ENCODE measurements at regions of chr12 and their contacts with region 1.

Region 1: GRCh38 chr12:51217968-51218606 is at the start of gene POU6F1:
- DNase-seq: peak; percentile 89

Region 2: GRCh38 chr12:51070004-51070403 is 148.1 kb before region 1 on chr12:
- CTCF ChIA-PET with region 1: no interaction called
- POLR2A ChIA-PET with region 1: no interaction called
- DNase-seq: no peak

Region 3: DNA sequence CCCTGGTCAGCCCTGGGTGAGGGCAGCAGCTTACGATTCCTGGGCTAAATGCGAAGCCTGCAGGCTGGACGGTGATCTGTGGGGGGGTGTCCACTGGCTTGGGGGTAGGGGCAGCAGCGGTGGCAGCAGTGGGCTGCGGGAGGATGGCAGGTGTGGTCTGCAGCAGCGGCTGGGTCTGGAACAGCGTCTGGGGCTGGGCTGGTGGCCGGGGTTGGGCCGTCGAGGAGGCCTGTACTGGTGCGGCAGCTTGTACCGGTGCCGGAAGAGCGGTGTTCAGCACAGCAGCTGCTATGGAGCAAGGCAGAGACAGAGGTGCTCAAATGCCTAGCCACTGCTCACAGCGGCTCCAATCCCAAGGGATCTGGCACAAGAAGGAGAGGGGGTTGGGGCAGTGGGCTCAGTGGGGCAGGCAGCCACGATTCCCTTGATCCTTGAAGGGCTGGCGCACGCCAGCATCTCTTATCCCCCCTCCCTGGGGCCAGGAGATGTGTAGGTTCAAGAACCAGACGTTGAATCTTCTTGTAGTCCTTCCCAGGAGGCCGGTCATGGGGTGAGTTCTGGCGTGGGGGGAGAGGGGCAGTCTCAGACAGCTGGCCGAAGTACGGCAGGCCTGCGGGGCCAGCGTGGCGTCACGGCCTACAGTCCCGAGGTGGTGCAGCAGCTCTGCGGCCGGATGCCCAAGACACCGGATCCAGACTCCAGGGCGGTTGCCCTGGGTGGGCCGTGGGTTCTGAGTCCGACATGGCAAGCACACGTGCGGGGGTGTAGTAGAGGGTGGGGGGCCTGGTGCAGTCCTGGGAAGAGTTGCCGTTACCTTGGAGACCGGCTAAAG is 20.1 kb before region 1 on chr12:
- CTCF ChIA-PET with region 1: no interaction called
- POLR2A ChIA-PET with region 1: no interaction called
- DNase-seq: no peak

Region 4: GRCh38 chr12:51238510-51239334 is 20.6 kb after region 1 on chr12 and contains the start of gene DAZAP2:
- CTCF ChIA-PET with region 1: no interaction called
- POLR2A ChIA-PET with region 1: interaction called, 21 read pairs
- DNase-seq: peak; percentile 95

Region 5: DNA sequence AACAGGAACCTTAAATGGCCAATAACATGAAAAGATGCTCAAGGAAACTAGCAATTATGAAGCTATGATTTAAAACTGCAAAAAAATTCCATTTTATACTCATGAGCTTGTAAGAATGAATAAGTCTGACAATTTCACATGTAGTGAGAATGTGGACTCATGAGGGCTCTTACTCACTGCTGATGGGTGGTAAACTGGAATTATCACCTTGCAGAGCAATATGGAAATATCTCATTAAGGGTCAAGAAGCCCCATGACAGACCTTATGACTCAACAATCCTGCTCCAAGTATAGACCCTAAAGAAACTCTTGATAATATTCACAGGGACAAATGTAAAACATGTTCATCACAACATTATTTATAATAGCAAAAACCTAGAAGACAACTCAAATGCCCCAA is 75.6 kb after region 1 on chr12:
- CTCF ChIA-PET with region 1: no interaction called
- POLR2A ChIA-PET with region 1: no interaction called
- DNase-seq: no peak